Activated T-helper 1 cell treated with anti-CD3 and anti-CD28 coated beads, Interleukin-12 subunit alpha, Interleukin-12 subunit beta, Interleukin-2, Interleukin-4 antibody, amounts not matched to agents 30 ng/mL and 10 ng/mL and 1 ng/mL, durations not matched to agents 14 hours and 24 hours and 36 hours (primary cell): ENCODE measurements at regions of chr16 and their contacts with region 1.

Region 1: GRCh38 chr16:69339289-69340108 is at the starts of genes COG8 and NIP7:
- DNase-seq: peak; percentile 91
- H3K4me3 Mint-ChIP-seq: peak within 1 kb of the TSS; percentile 99
- H3K27ac Mint-ChIP-seq: peak within 1 kb of the TSS; percentile 99
- H3K4me1 Mint-ChIP-seq: peaks cover 43% of the 10 kb centered on the region
- H3K27me3 Mint-ChIP-seq: no peaks in the 10 kb centered on the region
- total RNA-seq, gene COG8: 45.3 and 46.5 TPM in 2 replicates
- total RNA-seq, gene NIP7: 80.7 and 85.8 TPM in 2 replicates

Region 2: DNA sequence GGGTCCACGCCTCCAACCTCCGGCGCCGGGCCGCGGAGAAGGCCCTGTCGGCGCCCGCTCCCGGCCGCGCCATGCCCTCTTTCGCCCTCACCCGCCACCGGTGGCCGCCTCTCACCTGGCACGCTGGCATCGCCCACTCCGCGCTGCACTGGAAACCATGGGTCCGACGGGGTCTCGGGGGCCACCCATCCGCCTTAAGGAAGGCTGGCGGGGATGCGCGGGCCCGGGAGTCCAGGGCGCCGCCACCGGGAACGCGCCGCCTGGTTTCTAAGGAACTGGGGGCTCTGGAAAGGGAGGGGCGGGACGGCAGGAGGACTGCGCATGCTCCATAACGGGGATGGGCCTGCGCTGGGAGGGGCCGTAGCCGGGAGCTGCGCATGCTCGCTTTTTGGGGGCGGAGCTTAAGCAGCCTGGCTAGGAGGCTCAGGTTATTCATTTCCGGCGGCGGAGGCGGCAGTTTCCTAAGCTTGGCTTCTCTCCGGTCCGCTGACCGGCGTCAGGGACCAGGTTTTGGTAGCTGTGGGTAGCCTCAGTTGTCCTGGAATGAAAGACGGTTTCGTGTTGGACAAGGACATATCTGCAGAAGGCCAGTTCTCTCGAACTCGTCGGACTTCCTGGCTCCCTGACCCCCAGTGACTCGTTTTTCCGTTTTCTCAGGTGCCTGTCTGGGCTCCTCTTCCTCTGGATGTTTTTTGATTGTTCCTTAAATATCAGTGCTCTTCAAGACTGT is 1620.3 kb before region 1 on chr16 and contains the start of gene GFOD2:
- intact Hi-C with region 1: loop called (anchors 2 kb)
- DNase-seq: peak; percentile 97
- H3K4me3 Mint-ChIP-seq: peak within 1 kb of the TSS; percentile 96
- H3K27ac Mint-ChIP-seq: peak within 1 kb of the TSS; percentile 94
- H3K4me1 Mint-ChIP-seq: peaks cover 33% of the 10 kb centered on the region
- H3K27me3 Mint-ChIP-seq: no peaks in the 10 kb centered on the region
- total RNA-seq, gene GFOD2: 19.6 and 20.3 TPM in 2 replicates

Region 3: DNA sequence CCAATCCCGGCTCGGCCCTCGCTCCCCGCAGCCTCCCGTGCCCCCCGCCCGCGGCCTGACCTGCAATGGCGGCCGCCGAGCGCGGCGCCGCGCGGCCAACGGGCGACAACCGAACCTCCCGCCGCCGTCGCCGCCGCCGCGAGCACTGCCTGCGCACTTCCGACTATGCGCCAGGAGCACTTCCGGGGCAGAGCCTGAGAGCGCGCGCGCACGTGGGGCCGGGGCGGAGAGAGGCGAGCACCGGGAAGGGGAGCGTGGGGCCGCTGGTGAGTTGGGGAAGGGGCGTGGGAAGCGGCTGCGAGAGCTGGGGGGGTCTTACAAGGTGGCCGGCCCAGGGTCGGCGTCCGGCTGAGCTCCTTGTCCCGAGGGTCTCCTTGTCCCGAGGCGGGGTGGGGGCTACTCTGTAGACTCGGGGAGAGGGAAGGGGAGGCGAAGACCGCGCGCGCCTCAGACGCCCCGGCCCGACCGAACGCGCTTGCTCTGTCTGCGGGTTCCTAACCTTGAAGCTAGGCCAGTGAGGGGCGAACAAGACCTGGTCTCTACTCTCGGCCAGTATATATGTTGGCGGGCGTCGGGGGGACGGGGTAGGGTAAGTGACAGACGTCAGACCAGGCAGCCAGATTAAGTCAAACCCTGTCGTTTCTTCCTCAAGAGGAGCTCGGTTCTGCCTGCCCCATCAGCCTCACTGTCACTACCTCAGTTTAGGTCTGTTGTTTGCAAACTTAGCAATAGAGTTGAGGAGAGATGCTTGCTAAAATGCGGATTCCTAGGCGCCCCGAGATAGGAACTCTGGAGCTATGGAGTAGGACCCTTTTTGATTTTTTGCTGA is 206.9 kb before region 1 on chr16 and contains the starts of genes CHTF8 and UTP4:
- intact Hi-C with region 1: loop called (anchors 1 kb)
- DNase-seq: peak; percentile 88
- H3K4me3 Mint-ChIP-seq: peak within 1 kb of the TSS; percentile 97
- H3K27ac Mint-ChIP-seq: peak within 1 kb of the TSS; percentile 92
- H3K4me1 Mint-ChIP-seq: peaks cover 49% of the 10 kb centered on the region
- H3K27me3 Mint-ChIP-seq: no peaks in the 10 kb centered on the region
- total RNA-seq, gene CHTF8: 134 and 143 TPM in 2 replicates
- total RNA-seq, gene UTP4: 117 and 127 TPM in 2 replicates

Region 4: DNA sequence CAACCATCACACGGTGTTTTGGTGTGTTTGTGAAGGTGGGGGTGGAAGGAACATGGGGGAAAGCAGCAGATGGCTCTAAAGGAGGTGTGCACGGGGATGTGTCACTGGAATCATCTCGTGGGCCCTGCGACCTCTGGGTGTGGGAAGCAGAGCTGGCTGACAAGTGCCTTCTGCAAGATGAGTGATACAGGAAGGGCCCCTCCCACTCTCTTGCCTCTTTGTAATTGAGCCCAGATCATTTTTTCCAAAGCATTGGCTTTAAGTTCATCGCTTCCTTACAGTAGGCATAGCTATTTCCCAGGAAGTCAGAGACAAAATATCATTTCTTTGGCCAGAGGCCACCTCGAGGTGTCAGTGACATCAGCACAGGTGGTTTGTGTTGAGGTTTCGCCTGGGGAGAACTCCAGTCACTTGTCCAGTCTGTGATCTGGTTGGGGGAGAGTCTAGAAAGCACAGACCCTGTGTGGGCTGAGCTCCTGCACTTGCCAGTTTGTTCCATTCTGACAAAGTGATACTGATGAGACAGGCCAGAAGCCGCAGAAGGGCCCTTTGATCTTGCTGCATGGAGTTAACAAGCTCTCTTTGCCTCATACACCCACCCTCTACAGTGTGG is 173.2 kb before region 1 on chr16:
- intact Hi-C with region 1: loop called (anchors 1 kb)
- DNase-seq: peak; percentile 46
- H3K4me3 Mint-ChIP-seq: peak overlapping the region; percentile 69
- H3K27ac Mint-ChIP-seq: peak overlapping the region; percentile 89
- H3K4me1 Mint-ChIP-seq: peaks cover 49% of the 10 kb centered on the region
- H3K27me3 Mint-ChIP-seq: no peaks in the 10 kb centered on the region

Region 5: GRCh38 chr16:69386596-69386995 is 47.1 kb after region 1 on chr16:
- intact Hi-C with region 1: loop called (anchors 1 kb)
- DNase-seq: no peak
- H3K4me3 Mint-ChIP-seq: peak overlapping the region; percentile 92
- H3K27ac Mint-ChIP-seq: no peak overlapping the region
- H3K4me1 Mint-ChIP-seq: peaks cover 26% of the 10 kb centered on the region
- H3K27me3 Mint-ChIP-seq: no peaks in the 10 kb centered on the region

Region 6: DNA sequence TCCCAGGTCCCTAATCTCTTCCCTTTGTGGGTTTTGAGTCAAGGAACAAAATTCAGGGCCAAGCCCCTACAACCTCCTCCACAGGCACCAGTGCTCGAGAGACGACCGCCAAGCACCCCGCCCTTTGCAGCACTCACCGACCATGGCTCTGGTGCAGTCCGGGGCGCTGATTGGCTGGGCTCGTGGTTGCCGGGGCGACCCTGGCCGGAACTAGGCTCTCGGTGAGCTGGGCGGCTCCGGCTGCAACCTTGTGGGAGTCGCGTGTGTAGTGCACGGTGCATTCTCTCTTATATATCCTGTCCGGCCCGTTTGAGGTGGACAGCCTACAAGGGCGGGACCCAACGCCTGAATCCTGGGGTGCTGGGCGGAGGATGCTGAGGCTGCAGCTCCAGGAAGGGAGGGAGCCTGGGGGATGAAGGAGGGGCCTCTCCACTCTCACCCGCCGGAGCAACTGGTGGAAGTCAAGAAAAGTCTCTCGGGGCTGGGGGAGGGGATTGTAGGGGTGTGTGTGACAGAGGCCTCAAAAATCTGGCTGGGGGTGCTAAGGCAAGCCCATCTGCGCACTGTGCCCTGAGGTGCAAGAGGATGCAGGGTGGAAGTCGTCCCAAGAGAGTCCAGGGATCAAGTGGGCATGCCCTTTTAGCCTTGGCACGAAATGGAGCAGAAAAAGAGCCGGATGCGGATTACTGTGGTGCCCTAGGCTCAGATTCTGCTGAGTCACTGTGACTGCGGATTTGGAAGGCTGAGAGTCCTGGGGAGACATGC is 387.0 kb after region 1 on chr16 and contains the start of gene NQO1:
- intact Hi-C with region 1: loop called (anchors 1 kb)
- DNase-seq: peak; percentile 91
- H3K4me3 Mint-ChIP-seq: peak within 1 kb of the TSS; percentile 98
- H3K27ac Mint-ChIP-seq: peak within 1 kb of the TSS; percentile 98
- H3K4me1 Mint-ChIP-seq: peaks cover 42% of the 10 kb centered on the region
- H3K27me3 Mint-ChIP-seq: no peaks in the 10 kb centered on the region
- total RNA-seq, gene NQO1: 9.7 and 9.8 TPM in 2 replicates

Region 7: GRCh38 chr16:69754469-69755310 is 415.2 kb after region 1 on chr16 and contains the start of gene NOB1:
- intact Hi-C with region 1: loop called (anchors 2 kb)
- DNase-seq: peak; percentile 97
- H3K4me3 Mint-ChIP-seq: peak within 1 kb of the TSS; percentile 99
- H3K27ac Mint-ChIP-seq: peak within 1 kb of the TSS; percentile 98
- H3K4me1 Mint-ChIP-seq: peaks cover 32% of the 10 kb centered on the region
- H3K27me3 Mint-ChIP-seq: peaks cover 2% of the 10 kb centered on the region
- total RNA-seq, gene NOB1: 132 and 133 TPM in 2 replicates